ENCODE measurements at regions of chr20 and their contacts with region 1.

Region 1: GRCh38 chr20:43424394-43424793 is 33.3 kb upstream of the SRSF6 start:
- DNase-seq: no peak

Region 2: GRCh38 chr20:43365691-43366090 is 58.7 kb before region 1 on chr20:
- intact Hi-C with region 1: loop called in 1 of 2 experiments (anchors 2 kb)
- DNase-seq: peak; percentile 31

Measured in posterior vena cava (tissue), 2 donors.